ENCODE measurements at regions of chr11 and their contacts with region 1.

Region 1: DNA sequence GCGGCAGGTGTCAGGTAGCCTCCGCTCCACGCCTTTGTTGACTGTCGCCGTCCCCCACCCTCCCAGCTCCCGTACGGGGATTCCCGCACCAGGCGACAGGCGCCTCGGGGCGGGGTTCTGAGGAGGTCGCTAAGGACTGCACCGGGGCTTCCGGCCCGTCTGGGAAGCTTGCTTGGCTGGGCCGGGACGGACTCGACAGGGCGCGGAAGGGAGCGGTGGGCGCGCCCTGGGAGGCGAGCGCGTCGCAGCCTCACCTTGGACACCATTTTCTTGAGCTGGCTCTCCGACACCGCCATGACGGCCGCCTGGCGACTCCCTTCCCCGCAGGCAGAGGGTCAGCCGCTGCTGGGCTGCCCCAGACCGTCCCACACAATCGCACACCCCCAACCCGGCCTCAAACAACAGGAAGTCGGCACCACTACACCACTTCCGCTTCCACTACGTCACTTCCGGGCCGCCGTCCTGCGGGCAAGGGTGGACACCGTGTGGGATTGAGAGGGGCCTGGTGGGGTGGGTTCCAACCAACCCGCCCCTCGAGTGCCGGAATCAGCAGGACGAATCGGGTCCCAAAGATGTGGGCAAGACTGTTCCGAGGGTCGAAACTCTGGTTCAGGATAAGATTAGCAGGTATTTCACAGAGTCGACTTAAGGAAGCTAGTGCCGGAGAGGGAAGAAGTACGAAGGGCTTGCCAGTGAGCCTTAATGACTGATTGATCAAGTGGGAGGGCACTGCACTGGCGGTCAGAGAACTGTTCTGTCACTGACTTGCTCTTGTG is at the start of gene TSG101:
- DNase-seq: peak; percentile 92
- H3K4me3 Mint-ChIP-seq: peak within 1 kb of the TSS; percentile 99
- H3K27ac Mint-ChIP-seq: peak within 1 kb of the TSS; percentile 100
- H3K4me1 Mint-ChIP-seq: peaks cover 50% of the 10 kb centered on the region
- H3K27me3 Mint-ChIP-seq: no peaks in the 10 kb centered on the region
- total RNA-seq, gene TSG101: 40.4 to 44.2 TPM

Region 2: GRCh38 chr11:18105802-18106574 is 420.7 kb before region 1 on chr11 and contains the start of gene SAAL1:
- CTCF ChIA-PET with region 1: no interaction called
- POLR2A ChIA-PET with region 1: interaction called, 12 read pairs
- DNase-seq: peak; percentile 91
- H3K4me3 Mint-ChIP-seq: peak within 1 kb of the TSS; percentile 92
- H3K27ac Mint-ChIP-seq: peak within 1 kb of the TSS; percentile 82
- H3K4me1 Mint-ChIP-seq: peaks cover 27% of the 10 kb centered on the region
- H3K27me3 Mint-ChIP-seq: peaks cover 7% of the 10 kb centered on the region
- total RNA-seq, gene SAAL1: 21.0 to 21.7 TPM

Region 3: DNA sequence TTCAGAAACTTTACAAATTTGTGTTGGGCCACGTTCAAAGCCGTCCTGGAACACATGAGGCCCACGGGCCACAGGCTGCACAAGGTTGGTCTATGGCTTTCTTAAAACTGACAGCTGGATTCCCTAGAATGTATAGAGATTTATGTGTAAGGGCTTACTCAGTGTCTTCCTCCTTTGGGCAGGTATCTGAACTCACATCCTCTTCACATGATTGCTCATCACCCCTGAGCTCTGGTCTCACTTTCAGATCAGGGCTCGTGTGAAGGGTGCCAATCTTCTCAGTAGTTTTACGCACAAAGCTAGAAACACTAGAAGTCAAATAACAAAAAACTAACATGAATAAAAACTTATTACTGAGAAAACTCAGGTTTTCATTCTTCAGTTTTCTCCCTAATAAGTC is 231.8 kb before region 1 on chr11:
- CTCF ChIA-PET with region 1: no interaction called
- POLR2A ChIA-PET with region 1: no interaction called
- DNase-seq: no peak
- H3K4me3 Mint-ChIP-seq: no peak overlapping the region
- H3K27ac Mint-ChIP-seq: no peak overlapping the region
- H3K4me1 Mint-ChIP-seq: peaks cover 20% of the 10 kb centered on the region
- H3K27me3 Mint-ChIP-seq: no peaks in the 10 kb centered on the region

Region 4: DNA sequence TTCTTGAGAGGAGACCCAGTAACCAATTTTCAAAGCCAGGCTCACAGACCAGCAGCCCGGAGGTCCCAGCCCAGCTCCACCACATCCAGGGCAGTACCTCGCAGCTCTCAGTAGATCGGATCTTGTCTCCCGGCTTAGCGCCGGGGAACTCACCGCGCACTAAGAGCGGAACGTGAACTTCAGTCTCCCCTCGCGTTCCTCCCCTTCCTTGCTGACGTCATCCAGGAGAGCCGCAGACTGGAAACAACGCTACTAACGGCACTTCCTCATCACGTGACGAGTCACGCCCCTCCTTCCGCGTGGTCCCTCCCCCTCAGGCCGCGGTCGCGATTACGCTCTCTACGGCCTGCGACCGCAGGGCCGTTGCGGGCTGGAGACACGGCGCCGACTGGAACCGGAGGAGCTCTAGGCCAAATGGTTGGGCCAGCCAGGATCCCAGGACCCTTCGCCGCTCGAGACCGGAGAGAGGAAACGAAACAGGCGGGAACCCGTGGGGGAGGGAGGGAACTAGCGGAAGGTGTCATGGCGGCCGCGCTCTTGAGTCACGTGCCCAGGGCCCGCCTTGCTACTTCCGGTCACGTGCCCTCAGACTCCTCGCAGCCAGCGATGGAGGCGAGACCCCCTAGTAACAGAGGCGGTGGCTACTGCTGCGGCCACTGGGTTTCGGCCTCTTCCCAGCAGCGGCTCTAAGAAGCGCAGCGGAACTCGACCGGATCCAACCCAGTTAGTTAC is 204.6 kb before region 1 on chr11 and contains the starts of genes GTF2H1 and HPS5:
- CTCF ChIA-PET with region 1: interaction called, 3 read pairs
- POLR2A ChIA-PET with region 1: interaction called, 21 read pairs
- DNase-seq: peak; percentile 96
- H3K4me3 Mint-ChIP-seq: peak within 1 kb of the TSS; percentile 98
- H3K27ac Mint-ChIP-seq: peak within 1 kb of the TSS; percentile 96
- H3K4me1 Mint-ChIP-seq: peaks cover 65% of the 10 kb centered on the region
- H3K27me3 Mint-ChIP-seq: no peaks in the 10 kb centered on the region
- total RNA-seq, gene GTF2H1: 47.0 to 48.2 TPM
- total RNA-seq, gene HPS5: 20.3 to 22.6 TPM

Region 5: GRCh38 chr11:18347471-18348125 is 179.1 kb before region 1 on chr11:
- CTCF ChIA-PET with region 1: no interaction called
- POLR2A ChIA-PET with region 1: no interaction called
- DNase-seq: no peak
- H3K4me3 Mint-ChIP-seq: no peak overlapping the region
- H3K27ac Mint-ChIP-seq: peak overlapping the region; percentile 5
- H3K4me1 Mint-ChIP-seq: peaks cover 7% of the 10 kb centered on the region
- H3K27me3 Mint-ChIP-seq: no peaks in the 10 kb centered on the region

Region 6: DNA sequence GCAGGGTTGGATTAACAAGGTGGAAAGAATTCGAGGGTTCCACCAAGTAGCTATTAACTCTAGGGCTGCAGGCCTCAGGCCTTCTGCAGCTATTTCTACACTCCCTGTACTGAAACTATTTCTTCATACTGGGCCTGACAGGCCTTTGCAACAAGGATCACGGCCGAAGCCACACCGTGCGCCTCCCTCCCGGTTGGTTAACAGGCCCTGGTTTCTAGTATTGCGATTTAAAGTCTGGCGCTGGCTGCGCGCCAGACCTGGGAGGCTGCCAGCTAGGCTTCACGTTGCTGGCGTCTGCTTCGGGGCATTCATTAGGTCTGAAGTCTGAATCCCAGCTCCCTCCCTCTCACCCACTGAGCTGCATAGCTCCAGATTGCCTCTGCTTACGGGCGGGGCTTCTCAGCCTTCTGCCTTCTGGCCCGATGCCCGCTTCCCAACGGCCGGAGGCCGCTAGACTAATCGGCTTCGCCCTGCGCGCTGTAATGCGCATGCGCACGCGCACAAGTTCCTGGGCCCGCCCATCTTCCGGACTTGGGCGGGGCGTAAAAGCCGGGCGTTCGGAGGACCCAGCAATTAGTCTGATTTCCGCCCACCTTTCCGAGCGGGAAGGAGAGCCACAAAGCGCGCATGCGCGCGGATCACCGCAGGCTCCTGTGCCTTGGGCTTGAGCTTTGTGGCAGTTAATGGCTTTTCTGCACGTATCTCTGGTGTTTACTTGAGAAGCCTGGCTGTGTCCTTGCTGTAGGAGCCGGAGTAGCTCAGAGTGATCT is 130.8 kb before region 1 on chr11:
- CTCF ChIA-PET with region 1: interaction called, 6 read pairs
- POLR2A ChIA-PET with region 1: interaction called, 99 read pairs
- DNase-seq: peak; percentile 97
- H3K4me3 Mint-ChIP-seq: peak overlapping the region; percentile 99
- H3K27ac Mint-ChIP-seq: peak overlapping the region; percentile 96
- H3K4me1 Mint-ChIP-seq: peaks cover 61% of the 10 kb centered on the region
- H3K27me3 Mint-ChIP-seq: no peaks in the 10 kb centered on the region

Region 7: GRCh38 chr11:18578975-18579598 is 52.4 kb after region 1 on chr11:
- CTCF ChIA-PET with region 1: no interaction called
- POLR2A ChIA-PET with region 1: interaction called, 11 read pairs
- DNase-seq: peak; percentile 40
- H3K4me3 Mint-ChIP-seq: peak overlapping the region; percentile 59
- H3K27ac Mint-ChIP-seq: peak overlapping the region; percentile 60
- H3K4me1 Mint-ChIP-seq: peaks cover 45% of the 10 kb centered on the region
- H3K27me3 Mint-ChIP-seq: no peaks in the 10 kb centered on the region

Region 8: GRCh38 chr11:18615628-18616392 is 89.1 kb after region 1 on chr11:
- CTCF ChIA-PET with region 1: interaction called, 7 read pairs
- POLR2A ChIA-PET with region 1: interaction called, 24 read pairs
- DNase-seq: no peak
- H3K4me3 Mint-ChIP-seq: peak overlapping the region; percentile 12
- H3K27ac Mint-ChIP-seq: peak overlapping the region; percentile 57
- H3K4me1 Mint-ChIP-seq: peaks cover 52% of the 10 kb centered on the region
- H3K27me3 Mint-ChIP-seq: no peaks in the 10 kb centered on the region

Region 9: DNA sequence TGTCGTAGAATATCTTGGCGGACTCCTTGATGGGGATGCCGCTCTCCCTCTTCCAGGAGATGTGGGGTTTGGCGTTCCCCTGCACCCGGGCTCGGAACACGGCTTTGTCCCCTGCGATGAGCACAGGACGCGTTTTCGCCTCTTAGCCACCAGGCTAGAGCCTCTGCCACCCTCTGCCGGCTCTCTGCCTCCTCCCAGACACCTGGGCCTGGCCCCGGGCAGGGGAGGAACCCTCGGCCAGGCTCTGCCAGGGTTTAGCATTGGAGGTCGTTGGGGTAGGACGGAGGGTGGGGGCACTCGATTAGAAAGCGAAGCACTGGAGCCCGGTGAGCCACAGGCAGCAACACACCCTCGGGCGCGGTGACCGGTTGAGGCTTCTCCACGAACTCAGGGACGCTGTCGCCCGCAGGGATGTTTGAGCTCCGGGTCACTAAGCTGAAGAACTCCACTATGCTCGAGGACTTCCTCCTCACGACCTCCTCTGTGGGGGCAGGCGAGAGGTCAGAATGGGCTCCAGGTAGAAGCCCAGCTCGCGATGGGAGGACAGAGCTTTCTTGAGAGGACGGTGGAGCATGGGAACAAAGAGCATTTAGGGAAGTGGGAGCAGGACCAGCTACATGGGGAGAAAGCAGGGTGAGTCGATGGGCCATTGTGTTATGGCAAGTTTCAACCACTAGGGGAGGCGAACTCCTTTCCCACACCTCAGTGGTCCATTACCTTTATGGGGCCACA is 195.0 kb after region 1 on chr11:
- CTCF ChIA-PET with region 1: interaction called, 12 read pairs
- POLR2A ChIA-PET with region 1: interaction called, 8 read pairs
- DNase-seq: peak; percentile 54
- H3K4me3 Mint-ChIP-seq: peak overlapping the region; percentile 80
- H3K27ac Mint-ChIP-seq: peak overlapping the region; percentile 31
- H3K4me1 Mint-ChIP-seq: peaks cover 12% of the 10 kb centered on the region
- H3K27me3 Mint-ChIP-seq: peaks cover 11% of the 10 kb centered on the region

Measured in activated CD4-positive, alpha-beta memory T cell treated with anti-CD3 and anti-CD28 coated beads, Interleukin-2, amount 10 ng/mL, durations not matched to agents 7 days and 5 days (primary cell).